Prostate gland (tissue), 2 donors: ENCODE measurements at regions of chr11 and their contacts with region 1.

Region 1: DNA sequence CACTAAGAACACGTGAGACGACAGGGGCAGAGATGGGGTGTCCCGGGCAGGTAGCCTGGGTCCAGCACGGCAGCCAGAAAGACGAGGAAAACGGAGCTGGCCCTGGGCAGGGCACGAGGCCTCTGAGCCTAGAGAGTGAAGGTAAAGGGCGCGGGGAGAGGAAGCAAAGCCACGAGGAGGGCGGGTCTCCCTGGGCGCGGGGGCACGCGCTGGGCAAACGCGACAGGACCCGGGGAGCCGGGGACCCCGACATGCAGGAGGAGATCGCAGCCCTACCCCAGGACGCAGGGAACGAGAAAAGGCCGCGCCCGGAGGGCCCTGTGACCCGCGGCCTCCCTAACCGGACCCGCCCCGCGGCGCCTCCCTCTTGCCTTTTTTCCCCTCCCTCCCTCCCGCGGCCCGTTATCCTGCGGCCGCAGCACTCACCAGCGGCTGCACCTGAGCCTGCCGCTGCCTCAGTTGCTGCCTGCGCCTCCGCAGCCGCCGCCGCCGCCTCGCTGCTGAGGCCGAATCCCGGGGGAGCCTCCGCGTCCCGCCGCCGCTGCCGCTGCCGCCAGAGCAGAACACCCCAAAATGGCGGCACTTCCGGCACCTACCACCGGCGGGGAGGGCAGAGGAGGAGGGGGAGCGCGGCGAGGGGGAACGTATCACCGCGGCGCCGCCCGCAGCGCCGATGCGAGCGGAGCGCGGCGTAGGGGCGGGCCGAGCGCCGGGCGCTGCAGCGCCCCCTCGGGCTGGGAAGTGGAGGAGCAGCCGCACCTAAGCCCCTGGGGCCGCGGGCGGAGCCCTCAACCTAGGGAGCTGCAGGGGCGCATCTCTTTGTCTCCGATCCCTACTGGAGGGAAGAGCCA is at the start of gene CELF1:
- DNase-seq: peak; percentile 87
- H3K4me3 ChIP-seq: peak within 1 kb of the TSS; percentile 74 to 98
- H3K27ac ChIP-seq: peak within 1 kb of the TSS; percentile 84 to 93
- H3K4me1 ChIP-seq: no peaks in the 10 kb centered on the region
- H3K27me3 ChIP-seq: no peaks in the 10 kb centered on the region
- CTCF ChIP-seq: peak; percentile 88 to 97 (median 92)
- POLR2A ChIP-seq: peak; percentile 60
- total RNA-seq, gene CELF1: 68.9 to 134 TPM

Region 2: GRCh38 chr11:47407746-47408590 is 144.8 kb before region 1 on chr11 and contains the start of gene SLC39A13:
- intact Hi-C with region 1: loop called (anchors 10 kb)
- DNase-seq: peak; percentile 92
- H3K4me3 ChIP-seq: peak within 1 kb of the TSS; percentile 58 to 68
- H3K27ac ChIP-seq: peak within 1 kb of the TSS; percentile 90 to 94
- H3K4me1 ChIP-seq: peaks cover 8% of the 10 kb centered on the region
- H3K27me3 ChIP-seq: no peaks in the 10 kb centered on the region
- CTCF ChIP-seq: peak; percentile 74 to 97 (median 88)
- POLR2A ChIP-seq: peak; percentile 82
- total RNA-seq, gene SLC39A13: 53.1 to 93.7 TPM

Region 3: GRCh38 chr11:47466701-47467250 is 86.0 kb before region 1 on chr11:
- intact Hi-C with region 1: loop called (anchors 5 kb)
- DNase-seq: no peak
- H3K4me3 ChIP-seq: no peak overlapping the region
- H3K27ac ChIP-seq: peak overlapping the region; percentile 9 to 48
- H3K4me1 ChIP-seq: peaks cover 8% of the 10 kb centered on the region
- H3K27me3 ChIP-seq: no peaks in the 10 kb centered on the region
- CTCF ChIP-seq: no peak
- POLR2A ChIP-seq: no peak